Ovary (tissue), 10 donors: ENCODE measurements at regions of chr9 and their contacts with region 1.

Region 1: GRCh38 chr9:3658964-3659363 is 133.2 kb upstream of the RFX3 start:
- DNase-seq: no peak
- H3K4me3 ChIP-seq: no peak overlapping the region
- H3K27ac ChIP-seq: no peak overlapping the region
- H3K4me1 ChIP-seq: no peaks in the 10 kb centered on the region
- H3K27me3 ChIP-seq: no peaks in the 10 kb centered on the region
- CTCF ChIP-seq: no peak
- EP300 ChIP-seq: no peak
- POLR2A ChIP-seq: no peak

Region 2: DNA sequence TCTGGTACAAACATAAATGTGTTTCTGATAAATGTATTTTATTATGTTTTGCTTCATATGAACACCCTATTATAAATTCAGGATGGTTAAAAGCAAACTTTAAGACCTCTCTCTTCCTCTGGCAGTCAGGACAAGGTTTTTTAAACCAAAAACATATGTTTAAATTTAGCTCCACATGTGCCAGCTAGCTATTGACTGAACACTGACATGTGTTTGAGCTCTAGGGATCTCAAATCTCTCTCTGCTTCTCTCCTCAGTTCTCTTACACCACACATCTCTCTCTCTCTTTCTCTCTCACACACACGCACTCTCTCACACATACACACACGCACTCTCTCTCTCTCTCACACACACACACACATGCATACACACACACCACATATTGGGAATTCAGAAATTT is 17.0 kb after region 1 on chr9:
- intact Hi-C with region 1: no loop called
- DNase-seq: no peak
- H3K4me3 ChIP-seq: no peak overlapping the region
- H3K27ac ChIP-seq: no peak overlapping the region
- H3K4me1 ChIP-seq: no peaks in the 10 kb centered on the region
- H3K27me3 ChIP-seq: no peaks in the 10 kb centered on the region
- CTCF ChIP-seq: no peak
- EP300 ChIP-seq: no peak
- POLR2A ChIP-seq: no peak

Region 3: DNA sequence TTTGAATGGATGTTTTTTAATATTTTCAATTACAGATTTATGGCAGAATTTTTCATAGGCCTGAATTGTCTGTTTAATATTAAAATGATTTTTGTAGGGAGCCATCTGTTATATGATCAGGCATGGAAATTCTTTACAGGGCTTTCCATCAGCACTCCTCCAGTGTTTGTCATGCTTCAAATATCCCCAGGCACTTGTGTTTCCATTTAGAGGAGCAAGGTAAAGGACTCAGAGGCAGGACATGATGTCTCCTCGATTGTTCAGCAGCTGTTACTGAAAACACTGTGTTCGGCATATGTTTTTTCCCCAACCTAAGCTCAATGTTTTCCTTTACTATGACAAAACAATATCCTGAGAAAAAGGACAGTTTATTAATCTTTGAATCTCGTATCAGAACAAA is 39.1 kb after region 1 on chr9:
- intact Hi-C with region 1: loop called in 1 of 4 experiments (anchors 2 kb)
- DNase-seq: no peak
- H3K4me3 ChIP-seq: no peak overlapping the region
- H3K27ac ChIP-seq: no peak overlapping the region
- H3K4me1 ChIP-seq: no peaks in the 10 kb centered on the region
- H3K27me3 ChIP-seq: no peaks in the 10 kb centered on the region
- CTCF ChIP-seq: no peak
- EP300 ChIP-seq: no peak
- POLR2A ChIP-seq: no peak